CD4-positive, alpha-beta memory T cell (primary cell): ENCODE measurements at regions of chr10 and their contacts with region 1.

Region 1: DNA sequence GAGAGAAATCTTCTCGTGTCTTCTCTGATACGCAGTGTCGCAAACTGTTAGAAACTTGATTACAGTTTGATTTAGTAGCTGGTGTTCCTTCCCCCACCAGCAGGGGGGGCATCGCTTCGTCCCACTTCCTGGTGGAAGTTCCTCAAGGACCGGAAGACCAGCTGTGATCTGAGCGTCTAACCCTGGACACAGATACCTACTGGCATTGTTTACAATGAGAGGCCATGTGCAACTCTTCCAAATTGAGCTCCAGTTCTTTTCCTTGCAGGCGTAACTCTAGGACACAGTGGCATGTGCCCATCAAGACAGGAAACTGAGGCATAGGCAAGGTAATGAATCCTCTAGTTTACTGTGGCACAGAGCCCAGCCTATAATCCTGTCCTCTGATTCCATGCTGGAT is 219.0 kb downstream of the CCDC3 start:
- DNase-seq: peak in 2 of 5 donors; percentile 7 to 12
- H3K4me3 ChIP-seq: no peak overlapping the region
- H3K4me3 Mint-ChIP-seq: no peak overlapping the region
- H3K27ac ChIP-seq: no peak overlapping the region
- H3K27ac Mint-ChIP-seq: peak overlapping the region in 2 of 7 donors; percentile 36 to 38
- H3K4me1 ChIP-seq: no peaks in the 10 kb centered on the region
- H3K4me1 Mint-ChIP-seq: peaks cover 5 to 7% (median 6%) of the 10 kb centered on the region in 4 donors
- H3K27me3 ChIP-seq: no peaks in the 10 kb centered on the region
- H3K27me3 Mint-ChIP-seq: no peaks in the 10 kb centered on the region

Region 2: GRCh38 chr10:12795315-12796110 is 13.0 kb after region 1 on chr10:
- CTCF ChIA-PET with region 1: interaction called, 10 read pairs
- POLR2A ChIA-PET with region 1: no interaction called
- intact Hi-C with region 1: no loop called
- DNase-seq: no peak
- H3K4me3 ChIP-seq: no peak overlapping the region
- H3K4me3 Mint-ChIP-seq: no peak overlapping the region
- H3K27ac ChIP-seq: no peak overlapping the region
- H3K27ac Mint-ChIP-seq: no peak overlapping the region
- H3K4me1 ChIP-seq: no peaks in the 10 kb centered on the region
- H3K4me1 Mint-ChIP-seq: peaks cover 0 to 1% (median 0%) of the 10 kb centered on the region in 4 donors
- H3K27me3 ChIP-seq: no peaks in the 10 kb centered on the region
- H3K27me3 Mint-ChIP-seq: no peaks in the 10 kb centered on the region

Region 3: GRCh38 chr10:12806228-12807095 is 23.9 kb after region 1 on chr10:
- CTCF ChIA-PET with region 1: interaction called, 16 read pairs
- POLR2A ChIA-PET with region 1: no interaction called
- intact Hi-C with region 1: no loop called
- DNase-seq: peak in 1 of 5 donors; percentile 17
- H3K4me3 ChIP-seq: no peak overlapping the region
- H3K4me3 Mint-ChIP-seq: no peak overlapping the region
- H3K27ac ChIP-seq: no peak overlapping the region
- H3K27ac Mint-ChIP-seq: no peak overlapping the region
- H3K4me1 ChIP-seq: no peaks in the 10 kb centered on the region
- H3K4me1 Mint-ChIP-seq: peaks cover 0 to 2% (median 0%) of the 10 kb centered on the region in 4 donors
- H3K27me3 ChIP-seq: no peaks in the 10 kb centered on the region
- H3K27me3 Mint-ChIP-seq: no peaks in the 10 kb centered on the region

Region 4: DNA sequence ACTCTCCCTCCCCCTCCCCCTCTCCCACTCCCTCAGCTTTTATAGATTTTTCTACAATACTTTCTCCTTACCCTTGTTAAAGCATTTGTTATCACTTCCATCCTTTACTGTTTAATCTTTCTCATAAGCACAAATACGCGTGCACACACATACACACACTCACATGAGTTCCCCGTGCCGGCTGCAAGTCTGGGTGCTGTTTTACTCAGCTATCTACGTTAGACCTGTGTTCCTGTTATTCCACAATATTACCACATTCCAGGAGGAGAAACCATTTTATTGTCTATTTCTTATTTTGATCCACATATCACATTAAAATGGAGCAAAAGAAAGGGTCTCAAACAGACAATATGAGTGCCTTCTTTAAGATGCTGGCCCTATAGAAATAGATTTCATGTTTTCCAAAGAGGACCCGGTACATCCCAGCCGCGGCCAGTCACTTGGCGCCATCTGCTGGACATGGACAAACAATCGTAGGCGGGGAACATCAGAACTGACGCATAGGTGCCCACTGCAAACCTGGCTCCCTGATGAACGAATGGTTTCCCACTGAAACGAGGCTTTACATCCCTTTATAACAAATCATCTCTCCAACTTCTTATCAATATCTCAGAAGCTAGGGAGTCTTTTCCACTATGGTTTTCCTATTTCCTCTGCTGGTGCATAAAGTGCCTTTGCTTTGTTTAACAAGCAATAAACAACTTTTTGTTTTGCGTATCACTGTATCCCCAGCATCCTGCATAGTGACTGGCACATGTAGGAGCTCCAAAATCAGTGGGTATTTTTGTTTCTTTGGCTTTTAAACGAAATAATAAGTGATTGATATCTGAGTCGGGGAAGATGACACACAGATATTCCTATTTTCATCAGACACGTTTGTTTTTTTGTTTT is 292.3 kb after region 1 on chr10:
- CTCF ChIA-PET with region 1: interaction called, 4 read pairs
- POLR2A ChIA-PET with region 1: no interaction called
- intact Hi-C with region 1: loop called (anchors 1 kb)
- DNase-seq: peak in 4 of 5 donors; percentile 22 to 34 (median 28)
- H3K4me3 ChIP-seq: no peak overlapping the region
- H3K4me3 Mint-ChIP-seq: no peak overlapping the region
- H3K27ac ChIP-seq: no peak overlapping the region
- H3K27ac Mint-ChIP-seq: no peak overlapping the region
- H3K4me1 ChIP-seq: no peaks in the 10 kb centered on the region
- H3K4me1 Mint-ChIP-seq: peaks cover 0 to 4% (median 0%) of the 10 kb centered on the region in 4 donors
- H3K27me3 ChIP-seq: no peaks in the 10 kb centered on the region
- H3K27me3 Mint-ChIP-seq: peaks cover 4 to 15% of the 10 kb centered on the region in 2 donors